ENCODE measurements at regions of chr6 and their contacts with region 1.

Region 1: GRCh38 chr6:3124667-3125066 is 6.2 kb downstream of the BPHL start:
- DNase-seq: no peak
- H3K4me3 ChIP-seq: no peak overlapping the region
- H3K27ac ChIP-seq: no peak overlapping the region
- H3K4me1 ChIP-seq: peaks cover 0 to 14% (median 6%) of the 10 kb centered on the region in 4 donors
- H3K27me3 ChIP-seq: no peaks in the 10 kb centered on the region
- CTCF ChIP-seq: no peak
- EP300 ChIP-seq: no peak
- POLR2A ChIP-seq: no peak

Region 2: GRCh38 chr6:2524090-2524489 is 600.6 kb before region 1 on chr6:
- intact Hi-C with region 1: no loop called
- DNase-seq: no peak
- H3K4me3 ChIP-seq: no peak overlapping the region
- H3K27ac ChIP-seq: no peak overlapping the region
- H3K4me1 ChIP-seq: no peaks in the 10 kb centered on the region
- H3K27me3 ChIP-seq: no peaks in the 10 kb centered on the region
- CTCF ChIP-seq: no peak
- EP300 ChIP-seq: no peak
- POLR2A ChIP-seq: no peak

Region 3: DNA sequence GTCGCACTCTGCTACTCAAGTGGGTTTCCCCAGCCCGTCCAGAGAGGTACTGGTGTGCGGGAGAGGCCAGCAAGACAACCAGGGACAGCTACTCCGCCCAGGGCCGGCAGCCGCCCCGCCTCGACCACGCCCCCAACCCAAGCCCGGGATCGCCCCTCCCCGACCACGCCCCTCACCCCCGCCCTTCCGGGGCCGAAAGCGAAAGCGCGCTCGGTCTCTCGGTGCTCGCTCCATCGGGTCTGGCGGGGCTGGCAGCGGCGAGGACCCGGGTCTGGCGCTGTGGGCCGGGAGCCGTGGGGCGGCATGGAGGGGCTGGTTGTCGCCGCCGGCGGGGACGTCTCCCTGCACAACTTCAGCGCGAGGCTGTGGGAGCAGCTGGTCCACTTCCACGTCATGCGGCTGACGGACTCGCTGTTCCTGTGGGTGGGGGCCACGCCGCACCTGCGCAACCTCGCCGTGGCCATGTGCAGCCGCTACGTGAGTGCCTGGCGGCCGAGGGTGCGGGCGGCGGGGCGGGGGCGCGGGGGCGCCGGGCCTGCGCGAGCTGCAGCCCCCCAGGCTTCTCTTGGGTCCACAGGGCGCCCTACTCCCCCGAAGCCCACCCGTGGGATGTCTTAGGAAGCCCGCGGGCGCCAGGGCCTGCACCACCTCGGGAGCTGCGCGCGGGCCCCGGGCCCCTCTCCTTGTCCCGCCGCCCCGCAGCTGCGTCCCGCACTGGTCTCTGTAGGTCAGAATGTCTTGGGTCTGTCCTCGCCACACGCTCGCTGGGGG is 134.2 kb after region 1 on chr6 and contains the start of gene PSMG4:
- intact Hi-C with region 1: loop called (anchors 10 kb)
- DNase-seq: peak; percentile 96 to 97
- H3K4me3 ChIP-seq: peak within 1 kb of the TSS; percentile 84 to 100 (median 92)
- H3K27ac ChIP-seq: peak within 1 kb of the TSS; percentile 83 to 90 (median 84)
- H3K4me1 ChIP-seq: peaks cover 28 to 49% (median 39%) of the 10 kb centered on the region in 4 donors
- H3K27me3 ChIP-seq: no peaks in the 10 kb centered on the region
- CTCF ChIP-seq: peak in 1 of 7 experiments; percentile 8
- EP300 ChIP-seq: no peak
- POLR2A ChIP-seq: no peak
- total RNA-seq, gene PSMG4: 4.0 to 92.7 (median 7.8) TPM